AG04450 (cell line): ENCODE measurements at regions of chr2 and their contacts with region 1.

Region 1: GRCh38 chr2:172230889-172231401 is 128.2 kb upstream of the DLX2 start:
- DNase-seq: no peak
- H3K4me3 ChIP-seq: no peak overlapping the region
- H3K27ac ChIP-seq: no peak overlapping the region
- H3K27me3 ChIP-seq: peaks cover 2% of the 10 kb centered on the region
- CTCF ChIP-seq: no peak

Region 2: DNA sequence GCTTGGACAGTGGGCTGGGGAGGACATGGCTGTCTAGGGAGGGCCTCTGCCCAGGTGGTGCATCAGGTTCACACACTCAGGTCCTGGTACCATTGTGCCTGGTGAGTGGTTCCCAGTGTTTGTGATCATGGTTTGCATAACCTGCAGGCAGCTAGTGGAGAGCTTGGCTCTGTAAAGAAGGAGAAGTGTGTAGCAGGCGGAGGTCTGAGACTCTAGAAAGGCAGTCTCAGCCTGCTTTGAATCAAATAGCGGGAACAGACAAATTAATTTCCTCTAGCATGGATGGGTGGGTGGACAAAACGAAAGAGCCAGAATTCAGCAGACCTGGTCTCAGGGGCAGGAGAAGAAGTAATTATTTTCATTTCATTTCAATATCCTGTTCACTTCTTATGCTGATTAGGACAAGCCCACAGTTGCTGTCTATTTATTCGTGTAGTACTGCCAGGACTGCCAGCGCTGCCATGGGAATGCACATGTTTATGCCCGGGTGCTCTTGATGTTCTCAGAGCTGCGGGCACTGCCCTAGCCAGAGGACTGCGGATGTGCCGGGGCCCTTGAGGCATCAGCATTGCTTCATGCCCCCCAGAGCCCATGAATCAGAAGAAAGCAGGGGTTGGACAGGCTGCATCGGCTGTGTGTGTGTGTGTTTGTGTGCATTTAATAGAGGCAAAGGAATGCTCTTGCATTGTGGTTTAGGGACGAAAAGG is 82.8 kb before region 1 on chr2:
- CTCF ChIA-PET with region 1: no interaction called
- POLR2A ChIA-PET with region 1: interaction called, 11 read pairs
- DNase-seq: no peak
- H3K4me3 ChIP-seq: no peak overlapping the region
- H3K27ac ChIP-seq: no peak overlapping the region
- H3K27me3 ChIP-seq: peaks cover 20% of the 10 kb centered on the region
- CTCF ChIP-seq: no peak

Region 3: DNA sequence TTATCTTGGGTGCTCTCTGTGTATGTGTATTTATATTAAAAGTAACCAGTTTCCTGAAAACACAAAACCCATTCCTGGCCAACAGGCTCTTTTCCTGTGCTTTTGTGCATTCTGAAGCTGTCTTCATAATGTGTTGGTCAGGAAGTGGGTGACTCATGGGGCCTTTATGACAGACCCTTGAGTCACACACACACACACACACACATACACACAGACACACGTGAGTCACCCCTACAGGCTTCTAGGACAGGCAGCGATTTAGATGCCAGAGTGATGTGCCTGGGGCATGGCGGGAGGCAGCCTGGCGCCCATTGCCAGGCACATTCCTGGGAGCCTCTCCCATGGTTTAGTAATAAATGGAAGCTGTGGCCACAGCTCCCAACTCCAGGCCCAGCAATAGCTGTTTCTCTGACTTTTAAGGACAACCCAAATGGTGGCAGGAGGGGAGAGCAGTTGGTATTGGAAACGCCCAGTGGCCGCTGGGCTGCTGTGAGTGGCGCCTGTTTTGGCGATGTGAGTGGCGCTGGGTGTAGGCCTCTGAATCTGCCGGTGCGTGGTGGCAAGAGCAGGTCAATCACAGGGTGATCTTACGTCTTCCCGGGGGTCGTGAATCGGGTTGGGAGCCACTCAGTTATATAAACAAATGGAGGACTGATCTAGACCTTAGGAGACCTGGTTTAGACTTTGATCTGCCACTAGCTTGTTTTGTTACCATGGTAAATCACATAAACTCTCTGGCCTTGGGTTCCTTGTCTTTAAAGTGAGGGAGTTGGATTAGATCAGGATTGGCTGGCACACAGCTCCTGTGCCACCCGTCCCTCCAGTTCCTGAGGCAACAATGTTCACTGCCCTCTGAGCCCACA is 22.5 kb after region 1 on chr2:
- CTCF ChIA-PET with region 1: no interaction called
- POLR2A ChIA-PET with region 1: interaction called, 24 read pairs
- DNase-seq: peak; percentile 99
- H3K4me3 ChIP-seq: no peak overlapping the region
- H3K27ac ChIP-seq: peak overlapping the region; percentile 74
- H3K27me3 ChIP-seq: no peaks in the 10 kb centered on the region
- CTCF ChIP-seq: no peak